Ascending aorta (tissue), 2 donors: ENCODE measurements at regions of chr21 and their contacts with region 1.

Region 1: GRCh38 chr21:34614633-34615486 is at the start of gene RCAN1:
- DNase-seq: peak; percentile 69 to 94
- H3K4me3 ChIP-seq: peak within 1 kb of the TSS; percentile 74 to 81
- H3K27ac ChIP-seq: peak within 1 kb of the TSS; percentile 90 to 93
- H3K4me1 ChIP-seq: peaks cover 0 to 2% of the 10 kb centered on the region in 2 donors
- H3K27me3 ChIP-seq: no peaks in the 10 kb centered on the region
- CTCF ChIP-seq: no peak
- total RNA-seq, gene RCAN1: 12.5 TPM

Region 2: GRCh38 chr21:33915368-33916199 is 699.3 kb before region 1 on chr21 and contains the start of gene ATP5PO:
- intact Hi-C with region 1: loop called (anchors 10 kb)
- DNase-seq: peak; percentile 90 to 99
- H3K4me3 ChIP-seq: peak within 1 kb of the TSS; percentile 71 to 78
- H3K27ac ChIP-seq: peak within 1 kb of the TSS; percentile 66 to 79
- H3K4me1 ChIP-seq: peaks cover 0 to 18% of the 10 kb centered on the region in 2 donors
- H3K27me3 ChIP-seq: no peaks in the 10 kb centered on the region
- CTCF ChIP-seq: no peak
- total RNA-seq, gene ATP5PO: 62.5 TPM

Region 3: GRCh38 chr21:34801519-34802132 is 186.8 kb after region 1 on chr21:
- intact Hi-C with region 1: no loop called
- DNase-seq: peak in 1 of 2 donors; percentile 9
- H3K4me3 ChIP-seq: no peak overlapping the region
- H3K27ac ChIP-seq: no peak overlapping the region
- H3K4me1 ChIP-seq: no peaks in the 10 kb centered on the region
- H3K27me3 ChIP-seq: no peaks in the 10 kb centered on the region
- CTCF ChIP-seq: no peak